ENCODE measurements at regions of chr7 and their contacts with region 1.

Region 1: GRCh38 chr7:30348083-30348560 is 63.7 kb downstream of the ZNRF2 start:
- DNase-seq: peak; percentile 53
- H3K4me3 Mint-ChIP-seq: peak overlapping the region; percentile 38
- H3K27ac Mint-ChIP-seq: peak overlapping the region; percentile 81
- H3K4me1 Mint-ChIP-seq: peaks cover 65% of the 10 kb centered on the region
- H3K27me3 Mint-ChIP-seq: peaks cover 2% of the 10 kb centered on the region

Region 2: DNA sequence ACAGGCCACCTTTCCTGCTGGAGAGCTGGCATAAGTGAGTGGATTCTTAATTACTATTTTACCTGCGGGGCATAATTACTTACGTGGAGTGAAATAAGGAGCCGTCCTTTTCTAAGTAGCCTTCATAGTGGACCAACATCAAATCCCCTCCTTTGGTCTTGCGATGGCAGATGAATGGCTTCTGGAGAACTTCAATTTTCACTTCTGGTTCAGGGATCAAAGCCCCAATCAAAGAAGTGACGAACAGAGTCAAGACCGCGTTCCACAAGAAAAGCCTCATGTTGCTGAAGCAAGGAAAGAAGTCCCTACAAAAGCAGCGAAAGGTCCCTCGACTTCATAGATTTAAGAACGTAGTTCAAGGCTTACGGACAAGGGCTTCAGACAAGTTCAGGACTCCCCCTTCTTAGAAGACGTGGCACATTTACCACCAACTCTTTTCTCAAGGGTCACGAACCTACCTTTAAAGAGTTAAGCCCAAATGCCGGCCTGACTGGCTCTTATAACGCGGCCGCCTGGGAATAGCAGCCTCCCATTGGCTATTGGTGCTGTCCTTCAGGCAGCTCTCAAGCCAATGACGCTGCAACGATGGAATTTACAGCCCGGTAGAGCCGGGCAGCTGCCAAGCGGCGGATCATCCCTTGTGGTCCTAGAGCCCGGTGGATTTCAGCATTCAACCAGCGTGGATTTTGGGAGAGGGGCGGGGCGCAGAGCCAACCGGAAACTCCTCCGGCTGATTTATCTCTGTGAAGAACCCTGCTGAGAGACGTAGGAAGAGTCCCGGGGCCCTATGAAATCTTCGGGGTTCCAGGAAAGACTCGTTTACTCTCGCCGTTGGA is 321.7 kb before region 1 on chr7 and contains the start of gene FKBP14:
- intact Hi-C with region 1: loop called (anchors 2 kb)
- DNase-seq: peak; percentile 91
- H3K4me3 Mint-ChIP-seq: no peak within 1 kb of the TSS
- H3K27ac Mint-ChIP-seq: peak within 1 kb of the TSS; percentile 89
- H3K4me1 Mint-ChIP-seq: peaks cover 44% of the 10 kb centered on the region
- H3K27me3 Mint-ChIP-seq: no peaks in the 10 kb centered on the region
- total RNA-seq, gene FKBP14: 8.4 and 10.6 TPM in 2 replicates

Region 3: GRCh38 chr7:30164567-30164966 is 183.6 kb before region 1 on chr7:
- intact Hi-C with region 1: loop called (anchors 1 kb)
- DNase-seq: no peak
- H3K4me3 Mint-ChIP-seq: no peak overlapping the region
- H3K27ac Mint-ChIP-seq: no peak overlapping the region
- H3K4me1 Mint-ChIP-seq: peaks cover 45% of the 10 kb centered on the region
- H3K27me3 Mint-ChIP-seq: peaks cover 3% of the 10 kb centered on the region

Region 4: DNA sequence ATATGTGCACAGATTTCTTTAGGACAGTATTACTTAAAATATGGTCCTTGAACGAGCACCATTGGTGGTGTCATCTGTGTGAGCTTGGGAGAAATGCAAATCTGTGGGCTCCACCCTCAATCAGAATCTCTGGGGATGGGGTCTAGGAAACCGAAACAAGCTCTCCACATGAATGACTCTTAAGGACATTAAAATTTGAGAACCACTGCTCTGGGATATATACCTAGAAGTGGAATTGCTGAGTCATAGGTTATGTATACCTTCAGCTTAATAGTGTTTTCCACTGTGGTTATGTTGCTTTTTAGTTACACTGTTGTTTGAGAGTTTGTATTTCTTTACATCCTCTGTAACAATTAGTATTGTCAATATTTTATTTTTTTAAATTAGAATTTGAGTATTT is 39.7 kb before region 1 on chr7:
- intact Hi-C with region 1: loop called (anchors 1 kb)
- DNase-seq: no peak
- H3K4me3 Mint-ChIP-seq: no peak overlapping the region
- H3K27ac Mint-ChIP-seq: no peak overlapping the region
- H3K4me1 Mint-ChIP-seq: peaks cover 33% of the 10 kb centered on the region
- H3K27me3 Mint-ChIP-seq: peaks cover 1% of the 10 kb centered on the region

Region 5: DNA sequence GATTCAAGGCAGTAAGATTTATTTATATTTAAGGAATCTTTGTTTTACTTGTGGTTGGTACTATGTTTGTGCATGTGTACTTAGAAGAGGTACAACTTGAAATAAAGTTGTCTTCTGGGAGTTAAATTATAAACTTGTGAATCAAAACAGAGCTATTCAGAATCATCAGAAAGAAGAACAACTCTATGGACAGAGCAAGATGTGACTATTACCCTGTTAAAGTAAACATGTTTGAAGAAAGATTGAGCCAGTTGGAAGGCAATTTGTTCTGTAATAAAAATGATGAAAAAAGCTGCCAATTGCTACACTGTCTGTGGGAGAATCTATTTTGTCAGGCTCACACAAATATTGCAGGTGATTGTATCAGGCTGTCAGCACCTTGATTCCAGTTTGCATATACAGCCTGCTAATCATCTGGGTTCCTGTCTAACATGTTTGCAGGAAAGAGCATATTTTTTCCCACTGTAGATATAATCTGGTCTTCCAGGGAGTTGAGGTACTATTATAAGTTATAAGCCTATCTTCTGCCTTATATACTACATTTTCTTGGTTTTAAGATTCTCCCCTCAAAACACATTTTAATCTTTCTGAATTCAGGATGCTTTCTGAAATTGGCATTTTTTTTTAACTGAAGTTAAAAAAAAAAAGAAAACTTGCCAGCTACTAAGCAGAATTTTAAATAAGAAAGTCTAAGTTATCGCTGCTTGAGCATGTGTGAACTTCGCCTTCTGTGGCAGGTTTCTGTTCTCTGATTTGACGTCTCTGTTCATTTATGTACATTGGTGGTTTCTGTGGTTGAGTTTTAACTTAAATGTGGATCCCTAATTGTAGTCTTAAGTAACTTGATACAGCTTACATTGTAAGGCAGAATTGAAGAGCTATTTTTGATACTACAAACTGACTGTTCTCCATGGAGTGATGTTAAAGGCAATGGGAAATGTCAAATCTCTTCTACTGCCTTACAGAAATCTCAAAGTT is 17.7 kb before region 1 on chr7:
- intact Hi-C with region 1: loop called (anchors 1 kb)
- DNase-seq: peak; percentile 17
- H3K4me3 Mint-ChIP-seq: peak overlapping the region; percentile 60
- H3K27ac Mint-ChIP-seq: peak overlapping the region; percentile 18
- H3K4me1 Mint-ChIP-seq: peaks cover 39% of the 10 kb centered on the region
- H3K27me3 Mint-ChIP-seq: no peaks in the 10 kb centered on the region

Region 6: GRCh38 chr7:30504347-30505173 is 156.4 kb after region 1 on chr7 and contains the start of gene GGCT:
- intact Hi-C with region 1: loop called (anchors 2 kb)
- DNase-seq: peak; percentile 96
- H3K4me3 Mint-ChIP-seq: peak within 1 kb of the TSS; percentile 87
- H3K27ac Mint-ChIP-seq: peak within 1 kb of the TSS; percentile 89
- H3K4me1 Mint-ChIP-seq: peaks cover 53% of the 10 kb centered on the region
- H3K27me3 Mint-ChIP-seq: no peaks in the 10 kb centered on the region
- total RNA-seq, gene GGCT: 75.4 and 79.0 TPM in 2 replicates

Region 7: DNA sequence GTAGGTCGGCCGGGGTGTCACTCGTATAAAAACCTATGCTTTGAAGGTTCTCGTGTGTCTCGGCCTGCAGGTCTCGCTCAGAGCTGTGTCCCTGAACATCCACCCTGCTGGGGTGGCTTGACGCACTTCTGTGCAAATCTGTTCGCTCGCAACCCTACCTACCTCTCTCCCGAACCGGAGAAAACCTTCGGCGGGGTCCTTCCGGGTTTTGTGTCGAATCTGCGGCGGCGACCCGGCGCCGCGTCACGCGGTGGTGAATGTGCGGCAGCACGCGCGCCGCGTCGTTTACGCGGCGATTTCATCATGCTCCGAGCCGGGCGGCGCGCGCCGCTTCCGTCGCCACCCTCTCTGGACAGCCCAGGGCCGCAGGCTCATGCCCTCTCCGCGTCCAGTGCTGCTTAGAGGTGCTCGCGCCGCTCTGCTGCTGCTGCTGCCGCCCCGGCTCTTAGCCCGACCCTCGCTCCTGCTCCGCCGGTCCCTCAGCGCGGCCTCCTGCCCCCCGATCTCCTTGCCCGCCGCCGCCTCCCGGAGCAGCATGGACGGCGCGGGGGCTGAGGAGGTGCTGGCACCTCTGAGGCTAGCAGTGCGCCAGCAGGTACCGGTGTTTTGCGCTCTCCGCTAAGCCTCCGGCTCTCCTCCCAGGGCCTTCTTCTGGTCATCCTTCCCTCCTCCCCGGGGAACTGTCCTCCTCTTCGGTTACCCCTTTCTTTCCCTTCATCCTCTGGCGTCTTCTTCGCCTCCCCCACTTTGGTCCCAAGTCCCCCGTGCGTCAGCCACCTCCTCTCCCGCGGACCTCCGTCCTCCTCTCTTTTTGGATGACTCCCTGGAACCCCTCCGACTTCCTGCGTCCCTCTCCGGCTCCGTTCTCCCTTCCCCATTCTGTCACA is 246.7 kb after region 1 on chr7 and contains the start of gene GARS1:
- intact Hi-C with region 1: loop called (anchors 10 kb)
- DNase-seq: peak; percentile 88
- H3K4me3 Mint-ChIP-seq: peak within 1 kb of the TSS; percentile 99
- H3K27ac Mint-ChIP-seq: peak within 1 kb of the TSS; percentile 99
- H3K4me1 Mint-ChIP-seq: peaks cover 71% of the 10 kb centered on the region
- H3K27me3 Mint-ChIP-seq: no peaks in the 10 kb centered on the region
- total RNA-seq, gene GARS1: 234 and 250 TPM in 2 replicates

Measured in activated T-helper 1 cell treated with anti-CD3 and anti-CD28 coated beads, Interleukin-12 subunit alpha, Interleukin-12 subunit beta, Interleukin-2, Interleukin-4 antibody, amounts not matched to agents 30 ng/mL and 10 ng/mL and 1 ng/mL, durations not matched to agents 14 hours and 24 hours and 36 hours (primary cell).